Kidney (tissue), 22 donors: ENCODE measurements at regions of chr5 and their contacts with region 1.

Region 1: DNA sequence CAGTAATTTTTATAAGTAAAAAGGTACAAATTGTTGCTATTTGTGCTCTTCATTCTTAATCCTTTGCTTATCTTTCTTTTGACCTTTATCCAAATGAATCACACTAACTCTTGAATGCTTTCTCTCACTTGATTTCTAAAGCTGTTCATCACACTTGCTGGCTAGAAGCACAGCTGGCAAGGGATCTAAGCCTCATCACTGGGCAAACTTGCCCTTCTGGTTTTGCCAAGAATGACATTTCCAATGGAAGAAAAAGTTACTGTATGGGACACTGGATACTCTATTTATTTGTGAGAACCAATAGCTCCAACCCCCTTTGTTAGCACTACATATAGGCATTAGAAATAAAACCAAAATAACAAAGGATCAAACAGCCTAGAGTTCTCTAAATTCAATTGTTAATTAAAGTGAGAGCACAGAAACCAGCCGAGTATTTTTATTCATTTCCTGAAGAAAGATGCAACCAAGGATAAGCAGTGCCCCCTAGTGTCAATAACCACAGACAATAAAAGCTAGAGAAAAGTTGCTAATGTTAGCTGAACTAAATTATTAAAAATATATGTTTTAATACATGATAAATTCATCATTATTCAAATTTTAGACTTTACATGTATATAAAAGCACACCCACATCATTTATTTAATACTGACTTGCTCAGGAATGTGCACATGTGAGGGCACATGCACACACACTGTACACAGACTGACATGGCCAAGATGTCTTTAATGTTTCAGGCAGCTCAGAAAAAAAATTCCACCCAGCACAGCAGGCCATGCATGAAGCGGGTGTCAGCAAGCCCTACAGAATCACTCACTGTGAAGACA is 59.8 kb upstream of the POU5F2 start:
- DNase-seq: peak in 4 of 5 donors; percentile 62 to 89 (median 82)
- H3K4me3 ChIP-seq: peak overlapping the region in 2 of 3 donors; percentile 6 to 26
- H3K27ac ChIP-seq: no peak overlapping the region
- H3K4me1 ChIP-seq: peaks cover 0 to 3% (median 0%) of the 10 kb centered on the region in 3 donors
- H3K27me3 ChIP-seq: no peaks in the 10 kb centered on the region
- CTCF ChIP-seq: peak; percentile 72

Region 2: GRCh38 chr5:93607367-93608258 is 193.6 kb before region 1 on chr5:
- intact Hi-C with region 1: loop called (anchors 10 kb)
- DNase-seq: peak in 4 of 5 donors; percentile 68 to 92 (median 81)
- H3K4me3 ChIP-seq: peak overlapping the region; percentile 11 to 53 (median 13)
- H3K27ac ChIP-seq: no peak overlapping the region
- H3K4me1 ChIP-seq: peaks cover 0 to 5% (median under 1%) of the 10 kb centered on the region in 3 donors
- H3K27me3 ChIP-seq: peaks cover 23% of the 10 kb centered on the region
- CTCF ChIP-seq: peak; percentile 46

Region 3: DNA sequence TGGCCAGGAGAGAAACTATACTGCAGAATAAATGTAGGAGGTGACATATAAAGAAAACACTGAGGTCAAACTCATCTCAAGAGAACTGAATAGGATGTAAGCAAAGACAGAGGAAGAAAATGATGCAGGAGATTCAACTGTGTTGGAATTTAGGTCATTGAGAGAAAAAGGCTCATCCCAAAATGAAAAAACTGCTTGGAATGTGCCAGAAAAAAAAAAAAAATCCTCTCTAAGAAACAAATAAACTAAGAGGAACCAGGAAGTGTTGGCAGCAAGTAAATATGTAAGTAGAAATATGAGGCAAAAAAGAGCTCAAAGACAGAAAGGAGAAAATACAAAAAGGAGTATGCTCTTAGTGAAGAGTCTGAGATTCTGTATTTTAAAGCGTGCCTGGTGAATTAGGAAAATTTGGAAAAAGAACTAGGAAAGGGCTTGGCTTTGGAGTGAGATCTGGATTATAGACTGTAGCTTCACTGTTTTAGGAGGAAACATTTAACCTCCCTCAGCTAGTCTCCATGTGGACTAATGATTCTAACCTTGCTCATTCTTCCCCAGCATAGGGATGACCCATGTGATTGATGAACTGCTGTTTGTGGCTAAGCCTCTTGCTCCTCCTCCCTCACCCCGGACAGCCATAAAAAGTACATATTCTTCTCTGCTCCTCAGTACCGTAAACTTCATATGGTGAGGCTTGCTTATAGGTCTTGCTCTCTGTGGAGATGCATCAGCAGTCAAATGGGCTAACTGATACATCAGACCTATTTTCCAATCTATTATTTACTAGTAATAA is 125.8 kb after region 1 on chr5:
- intact Hi-C with region 1: no loop called
- DNase-seq: peak in 2 of 5 donors; percentile 9 to 11
- H3K4me3 ChIP-seq: no peak overlapping the region
- H3K27ac ChIP-seq: no peak overlapping the region
- H3K4me1 ChIP-seq: no peaks in the 10 kb centered on the region
- H3K27me3 ChIP-seq: no peaks in the 10 kb centered on the region
- CTCF ChIP-seq: no peak